CD4-positive, alpha-beta T cell (primary cell): ENCODE measurements at regions of chr10 and their contacts with region 1.

Region 1: GRCh38 chr10:110007701-110008517 is at the start of gene ADD3:
- DNase-seq: peak; percentile 83 to 97 (median 90)
- ATAC-seq: peak; percentile 72
- H3K4me3 ChIP-seq: peak within 1 kb of the TSS; percentile 63
- H3K4me3 Mint-ChIP-seq: peak within 1 kb of the TSS; percentile 99
- H3K27ac ChIP-seq: peak within 1 kb of the TSS; percentile 64 to 93
- H3K27ac Mint-ChIP-seq: no peak within 1 kb of the TSS
- H3K4me1 ChIP-seq: peaks cover 20% of the 10 kb centered on the region
- H3K4me1 Mint-ChIP-seq: peaks cover 50% of the 10 kb centered on the region
- H3K27me3 ChIP-seq: no peaks in the 10 kb centered on the region
- H3K27me3 Mint-ChIP-seq: no peaks in the 10 kb centered on the region
- CTCF ChIP-seq: no peak
- total RNA-seq, gene ADD3: 273 to 302 TPM

Region 2: DNA sequence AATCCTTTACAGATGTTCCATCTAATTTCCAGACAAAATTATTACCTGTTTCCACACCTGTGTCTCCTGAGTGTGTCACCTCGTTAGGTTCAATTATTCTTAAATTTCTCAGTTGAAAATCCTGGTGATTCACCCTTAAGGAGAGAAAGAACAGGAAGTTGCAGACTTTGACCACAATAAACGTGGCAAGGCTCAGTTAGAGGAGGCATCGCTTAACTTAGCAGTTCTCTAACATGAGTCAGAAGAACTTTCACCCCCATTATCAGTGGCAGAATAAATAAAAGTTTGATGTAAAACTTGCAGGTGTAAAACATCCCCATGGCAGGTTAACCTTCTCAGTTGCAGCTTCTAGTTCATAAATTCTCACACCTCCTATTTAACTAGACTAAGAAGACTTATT is 92.9 kb before region 1 on chr10:
- CTCF ChIA-PET with region 1: no interaction called
- POLR2A ChIA-PET with region 1: interaction called, 5 read pairs
- intact Hi-C with region 1: loop called in 1 of 2 experiments (anchors 5 kb)
- DNase-seq: peak in 12 of 14 experiments; percentile 8 to 88 (median 30)
- ATAC-seq: peak; percentile 95
- H3K4me3 ChIP-seq: no peak overlapping the region
- H3K4me3 Mint-ChIP-seq: peak overlapping the region; percentile 74
- H3K27ac ChIP-seq: peak overlapping the region in 1 of 2 donors; percentile 38
- H3K27ac Mint-ChIP-seq: peak overlapping the region; percentile 71
- H3K4me1 ChIP-seq: peaks cover 48% of the 10 kb centered on the region
- H3K4me1 Mint-ChIP-seq: peaks cover 78% of the 10 kb centered on the region
- H3K27me3 ChIP-seq: no peaks in the 10 kb centered on the region
- H3K27me3 Mint-ChIP-seq: no peaks in the 10 kb centered on the region
- CTCF ChIP-seq: no peak

Region 3: DNA sequence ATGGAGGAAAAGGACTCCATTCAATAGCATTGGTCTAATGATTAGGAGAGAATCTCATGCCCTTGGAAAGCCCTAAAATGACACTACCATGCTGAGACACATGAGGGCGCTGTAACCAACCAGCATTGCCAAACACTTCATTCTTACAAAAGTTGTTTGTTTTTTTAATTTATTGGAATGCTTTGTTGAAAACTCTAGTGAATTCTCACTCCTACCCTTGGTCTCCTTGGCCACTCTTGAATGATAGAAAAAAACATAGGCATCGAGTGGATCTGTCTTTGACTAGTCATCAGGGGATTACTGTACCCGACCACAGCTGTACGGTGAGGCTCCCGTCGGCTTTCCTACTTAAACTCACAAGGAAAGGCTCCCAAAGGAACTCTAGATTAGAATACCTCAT is 29.4 kb before region 1 on chr10:
- CTCF ChIA-PET with region 1: interaction called, 3 read pairs
- POLR2A ChIA-PET with region 1: interaction called, 6 read pairs
- intact Hi-C with region 1: loop called in 1 of 2 experiments (anchors 2 kb)
- DNase-seq: peak; percentile 40 to 80 (median 62)
- ATAC-seq: peak; percentile 73
- H3K4me3 ChIP-seq: no peak overlapping the region
- H3K4me3 Mint-ChIP-seq: no peak overlapping the region
- H3K27ac ChIP-seq: no peak overlapping the region
- H3K27ac Mint-ChIP-seq: no peak overlapping the region
- H3K4me1 ChIP-seq: peaks cover 3% of the 10 kb centered on the region
- H3K4me1 Mint-ChIP-seq: peaks cover 17% of the 10 kb centered on the region
- H3K27me3 ChIP-seq: no peaks in the 10 kb centered on the region
- H3K27me3 Mint-ChIP-seq: no peaks in the 10 kb centered on the region
- CTCF ChIP-seq: peak; percentile 91

Region 4: GRCh38 chr10:110059925-110060324 is 52.0 kb after region 1 on chr10:
- CTCF ChIA-PET with region 1: interaction called, 5 read pairs
- POLR2A ChIA-PET with region 1: interaction called, 16 read pairs
- intact Hi-C with region 1: no loop called
- DNase-seq: no peak
- ATAC-seq: peak; percentile 55
- H3K4me3 ChIP-seq: no peak overlapping the region
- H3K4me3 Mint-ChIP-seq: peak overlapping the region; percentile 67
- H3K27ac ChIP-seq: peak overlapping the region in 1 of 2 donors; percentile 18
- H3K27ac Mint-ChIP-seq: peak overlapping the region; percentile 79
- H3K4me1 ChIP-seq: peaks cover 40% of the 10 kb centered on the region
- H3K4me1 Mint-ChIP-seq: peaks cover 90% of the 10 kb centered on the region
- H3K27me3 ChIP-seq: no peaks in the 10 kb centered on the region
- H3K27me3 Mint-ChIP-seq: no peaks in the 10 kb centered on the region
- CTCF ChIP-seq: no peak

Region 5: DNA sequence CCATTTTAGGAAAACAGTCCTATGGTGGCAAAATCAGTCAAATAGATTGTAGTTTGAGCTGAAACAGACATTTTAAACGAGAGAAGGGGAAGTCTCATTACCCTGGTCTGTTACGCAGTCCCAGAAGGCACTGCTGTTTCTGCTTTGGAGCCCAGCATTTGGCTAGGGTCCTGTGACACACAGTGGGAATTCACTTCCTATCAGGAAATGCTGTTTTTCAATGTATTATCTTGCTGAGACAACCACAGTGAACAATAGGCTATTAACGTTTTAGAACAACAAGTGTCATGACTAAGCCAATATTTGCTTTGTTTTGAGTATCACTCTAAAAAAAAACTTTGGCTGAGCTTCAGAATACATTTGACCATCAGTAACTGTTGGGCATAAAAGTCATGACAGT is 74.0 kb after region 1 on chr10:
- CTCF ChIA-PET with region 1: interaction called, 9 read pairs
- POLR2A ChIA-PET with region 1: interaction called, 69 read pairs
- intact Hi-C with region 1: loop called in 1 of 2 experiments (anchors 2 kb)
- DNase-seq: peak in 5 of 14 experiments; percentile 22 to 60 (median 54)
- ATAC-seq: peak; percentile 11
- H3K4me3 ChIP-seq: no peak overlapping the region
- H3K4me3 Mint-ChIP-seq: peak overlapping the region; percentile 55
- H3K27ac ChIP-seq: peak overlapping the region in 1 of 2 donors; percentile 39
- H3K27ac Mint-ChIP-seq: peak overlapping the region; percentile 85
- H3K4me1 ChIP-seq: peaks cover 41% of the 10 kb centered on the region
- H3K4me1 Mint-ChIP-seq: peaks cover 97% of the 10 kb centered on the region
- H3K27me3 ChIP-seq: no peaks in the 10 kb centered on the region
- H3K27me3 Mint-ChIP-seq: no peaks in the 10 kb centered on the region
- CTCF ChIP-seq: no peak

Region 6: GRCh38 chr10:110118891-110119621 is 111.1 kb after region 1 on chr10:
- CTCF ChIA-PET with region 1: no interaction called
- POLR2A ChIA-PET with region 1: no interaction called
- intact Hi-C with region 1: no loop called
- DNase-seq: no peak
- ATAC-seq: no peak
- H3K4me3 ChIP-seq: no peak overlapping the region
- H3K4me3 Mint-ChIP-seq: no peak overlapping the region
- H3K27ac ChIP-seq: no peak overlapping the region
- H3K27ac Mint-ChIP-seq: peak overlapping the region; percentile 50
- H3K4me1 ChIP-seq: no peaks in the 10 kb centered on the region
- H3K4me1 Mint-ChIP-seq: peaks cover 16% of the 10 kb centered on the region
- H3K27me3 ChIP-seq: no peaks in the 10 kb centered on the region
- H3K27me3 Mint-ChIP-seq: no peaks in the 10 kb centered on the region
- CTCF ChIP-seq: no peak

Region 7: DNA sequence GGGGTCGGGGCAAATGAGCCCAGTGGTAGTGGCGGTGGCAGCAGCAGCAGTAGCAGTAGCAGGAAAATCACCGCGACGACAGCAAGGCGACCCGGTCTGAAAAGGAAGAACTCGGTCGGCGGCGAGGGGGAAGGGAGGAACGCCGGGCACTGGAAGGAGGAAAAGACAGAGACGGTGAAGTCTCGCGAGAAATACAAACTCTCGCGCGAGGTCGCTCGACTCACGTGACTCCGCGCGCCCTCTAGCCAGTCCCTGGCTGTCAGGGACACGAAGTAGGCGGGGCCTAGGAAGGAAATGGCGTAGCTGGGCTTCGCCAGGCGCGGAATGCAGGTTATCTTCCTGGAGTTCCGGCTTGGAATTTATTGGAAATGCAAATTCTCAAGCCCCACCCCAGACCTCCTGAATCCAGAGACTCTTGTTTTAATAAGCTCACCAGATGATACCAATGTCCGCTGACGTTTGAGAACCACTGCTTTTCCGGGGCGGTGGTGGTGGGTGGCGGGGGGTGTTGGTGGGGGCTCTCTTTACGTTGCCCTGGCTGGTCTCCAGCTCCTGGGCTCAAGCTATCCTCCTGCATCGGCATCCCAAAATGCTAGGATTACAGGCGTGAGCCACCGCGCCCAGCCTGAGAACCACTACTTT is 297.0 kb after region 1 on chr10 and contains the start of gene SMNDC1:
- CTCF ChIA-PET with region 1: interaction called, 4 read pairs
- POLR2A ChIA-PET with region 1: interaction called, 3 read pairs
- intact Hi-C with region 1: loop called in 1 of 2 experiments (anchors 5 kb)
- DNase-seq: peak; percentile 94 to 99 (median 96)
- ATAC-seq: peak; percentile 88
- H3K4me3 ChIP-seq: peak within 1 kb of the TSS; percentile 72
- H3K4me3 Mint-ChIP-seq: peak within 1 kb of the TSS; percentile 97
- H3K27ac ChIP-seq: peak within 1 kb of the TSS; percentile 74 to 90
- H3K27ac Mint-ChIP-seq: peak within 1 kb of the TSS; percentile 98
- H3K4me1 ChIP-seq: peaks cover 23% of the 10 kb centered on the region
- H3K4me1 Mint-ChIP-seq: peaks cover 61% of the 10 kb centered on the region
- H3K27me3 ChIP-seq: no peaks in the 10 kb centered on the region
- H3K27me3 Mint-ChIP-seq: no peaks in the 10 kb centered on the region
- CTCF ChIP-seq: no peak
- total RNA-seq, gene SMNDC1: 40.2 to 48.1 TPM